Naive thymus-derived CD4-positive, alpha-beta T cell (primary cell): ENCODE measurements at regions of chr2 and their contacts with region 1.

Region 1: DNA sequence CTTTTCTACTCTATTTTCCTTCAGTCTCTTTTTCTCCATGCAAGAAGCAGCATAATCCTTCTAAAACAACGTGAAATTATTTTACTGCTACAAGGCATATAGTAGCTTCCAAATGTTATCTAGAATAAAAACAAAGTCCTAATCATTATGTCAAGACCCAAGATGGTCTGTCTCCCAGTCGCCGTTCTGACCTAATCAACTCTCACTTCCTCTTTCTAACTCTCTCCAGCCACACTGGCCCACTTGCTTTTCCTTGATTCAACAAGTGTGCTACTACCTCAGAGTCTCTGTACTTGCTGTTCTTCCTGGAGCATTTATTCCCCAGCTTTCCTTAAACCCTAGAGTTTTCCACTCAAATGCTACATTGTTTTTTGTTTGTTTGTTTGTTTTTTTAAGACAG is 1491.2 kb downstream of the LRP1B start:
- DNase-seq: no peak
- ATAC-seq: no peak
- H3K4me3 ChIP-seq: no peak overlapping the region
- H3K4me3 Mint-ChIP-seq: no peak overlapping the region
- H3K27ac ChIP-seq: no peak overlapping the region
- H3K27ac Mint-ChIP-seq: no peak overlapping the region
- H3K4me1 ChIP-seq: no peaks in the 10 kb centered on the region
- H3K4me1 Mint-ChIP-seq: no peaks in the 10 kb centered on the region
- H3K27me3 ChIP-seq: no peaks in the 10 kb centered on the region
- H3K27me3 Mint-ChIP-seq: no peaks in the 10 kb centered on the region

Region 2: GRCh38 chr2:140662504-140662903 is 22.9 kb after region 1 on chr2:
- CTCF ChIA-PET with region 1: no interaction called
- POLR2A ChIA-PET with region 1: no interaction called
- intact Hi-C with region 1: loop called in 1 of 2 experiments (anchors 2 kb)
- DNase-seq: no peak
- ATAC-seq: no peak
- H3K4me3 ChIP-seq: no peak overlapping the region
- H3K4me3 Mint-ChIP-seq: no peak overlapping the region
- H3K27ac ChIP-seq: no peak overlapping the region
- H3K27ac Mint-ChIP-seq: no peak overlapping the region
- H3K4me1 ChIP-seq: no peaks in the 10 kb centered on the region
- H3K4me1 Mint-ChIP-seq: no peaks in the 10 kb centered on the region
- H3K27me3 ChIP-seq: no peaks in the 10 kb centered on the region
- H3K27me3 Mint-ChIP-seq: no peaks in the 10 kb centered on the region